Activated CD8-positive, alpha-beta memory T cell treated with anti-CD3 and anti-CD28 coated beads, Interleukin-2, amount 10 ng/mL, durations not matched to agents 7 days and 5 days (primary cell): ENCODE measurements at regions of chr20 and their contacts with region 1.

Region 1: GRCh38 chr20:46363800-46364634 is 42.4 kb downstream of the ELMO2 start:
- DNase-seq: peak; percentile 91
- ATAC-seq: peak; percentile 82
- H3K4me3 Mint-ChIP-seq: peak overlapping the region; percentile 89
- H3K27ac Mint-ChIP-seq: peak overlapping the region; percentile 92
- H3K4me1 Mint-ChIP-seq: peaks cover 75% of the 10 kb centered on the region
- H3K27me3 Mint-ChIP-seq: no peaks in the 10 kb centered on the region

Region 2: GRCh38 chr20:46199198-46199597 is 164.8 kb before region 1 on chr20:
- CTCF ChIA-PET with region 1: no interaction called
- DNase-seq: no peak
- ATAC-seq: no peak
- H3K4me3 Mint-ChIP-seq: no peak overlapping the region
- H3K27ac Mint-ChIP-seq: no peak overlapping the region
- H3K4me1 Mint-ChIP-seq: no peaks in the 10 kb centered on the region
- H3K27me3 Mint-ChIP-seq: peaks cover 37% of the 10 kb centered on the region

Region 3: DNA sequence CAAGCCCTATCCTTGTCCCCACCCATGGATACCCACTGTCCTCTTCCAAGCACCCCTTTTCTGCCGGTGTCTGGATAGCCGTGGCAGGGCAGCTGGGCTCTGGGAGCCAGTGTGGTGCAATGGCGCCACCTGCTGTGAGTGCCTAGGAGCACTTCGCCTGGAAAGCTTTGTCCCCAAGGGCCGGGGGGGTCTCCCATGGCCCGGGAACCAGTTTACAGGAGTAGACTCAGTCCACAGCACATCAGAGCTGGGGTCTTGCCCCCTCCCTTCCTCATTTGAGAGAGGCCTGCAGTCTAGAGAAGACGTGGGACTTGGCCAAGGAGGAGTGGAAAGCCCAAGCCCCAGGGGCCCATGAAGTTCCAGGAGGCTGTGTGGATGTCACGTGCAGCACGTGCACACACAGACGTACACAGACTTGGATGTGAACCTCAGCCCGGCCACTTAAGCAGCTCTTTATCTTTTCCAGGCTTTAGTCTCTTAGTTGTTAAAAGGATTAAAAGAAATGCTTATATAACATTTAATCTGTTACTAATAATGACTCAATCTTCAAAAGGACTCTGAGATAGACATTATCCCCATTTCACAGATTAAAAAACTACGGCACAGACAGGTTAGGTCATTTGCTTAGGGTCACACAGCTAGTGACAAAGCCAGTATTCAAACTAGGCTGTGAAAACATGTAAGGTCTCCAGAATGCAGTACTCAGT is 14.8 kb before region 1 on chr20:
- CTCF ChIA-PET with region 1: interaction called, 12 read pairs
- DNase-seq: peak; percentile 66
- ATAC-seq: peak; percentile 56
- H3K4me3 Mint-ChIP-seq: no peak overlapping the region
- H3K27ac Mint-ChIP-seq: peak overlapping the region; percentile 42
- H3K4me1 Mint-ChIP-seq: peaks cover 14% of the 10 kb centered on the region
- H3K27me3 Mint-ChIP-seq: peaks cover 3% of the 10 kb centered on the region

Region 4: GRCh38 chr20:46400828-46401477 is 36.9 kb after region 1 on chr20:
- CTCF ChIA-PET with region 1: interaction called, 11 read pairs
- DNase-seq: peak; percentile 64
- ATAC-seq: peak; percentile 75
- H3K4me3 Mint-ChIP-seq: peak overlapping the region; percentile 67
- H3K27ac Mint-ChIP-seq: peak overlapping the region; percentile 96
- H3K4me1 Mint-ChIP-seq: peaks cover 65% of the 10 kb centered on the region
- H3K27me3 Mint-ChIP-seq: no peaks in the 10 kb centered on the region

Region 5: GRCh38 chr20:46406199-46406985 is 42.4 kb after region 1 on chr20 and contains the start of gene ELMO2:
- CTCF ChIA-PET with region 1: interaction called, 16 read pairs
- DNase-seq: peak; percentile 98
- ATAC-seq: peak; percentile 90
- H3K4me3 Mint-ChIP-seq: peak within 1 kb of the TSS; percentile 96
- H3K27ac Mint-ChIP-seq: peak within 1 kb of the TSS; percentile 89
- H3K4me1 Mint-ChIP-seq: peaks cover 69% of the 10 kb centered on the region
- H3K27me3 Mint-ChIP-seq: no peaks in the 10 kb centered on the region
- total RNA-seq, gene ELMO2: 80.3 to 85.5 TPM